Cardiac septum (tissue), 1 donor: ENCODE measurements at regions of chr9 and their contacts with region 1.

Region 1: DNA sequence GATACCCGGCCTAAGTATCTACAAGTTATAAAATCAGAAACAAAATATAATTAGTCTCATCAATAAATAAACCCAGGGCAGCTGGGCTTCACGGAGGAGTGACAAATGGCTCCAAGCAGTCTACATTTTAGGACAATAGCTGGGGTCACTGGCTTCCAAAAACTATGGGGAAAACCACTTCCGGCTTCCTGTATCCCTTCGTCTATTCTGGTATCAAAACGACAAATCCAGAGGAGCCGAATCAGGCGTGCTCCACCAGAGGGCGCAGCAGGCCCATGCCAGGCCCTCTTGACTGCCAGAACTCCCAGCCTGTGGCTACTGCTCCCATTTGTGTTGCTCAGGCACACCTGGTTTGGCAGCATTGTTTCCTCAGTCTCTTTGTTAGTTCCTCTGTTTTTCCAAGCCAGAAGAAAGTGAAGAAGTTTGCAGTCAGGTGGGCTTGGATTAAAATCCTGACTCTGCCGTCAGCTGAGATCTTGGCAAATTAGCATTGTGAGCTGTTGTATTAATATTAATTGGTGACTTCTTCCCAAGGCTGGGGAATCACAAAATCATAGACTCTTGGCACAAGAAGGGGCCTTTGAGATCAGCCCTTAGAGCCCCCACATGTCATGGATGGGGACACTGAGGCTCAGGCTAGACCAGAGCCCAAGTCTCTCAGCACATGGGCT is 11.6 kb upstream of the RAB14 start:
- DNase-seq: peak; percentile 90

Region 2: DNA sequence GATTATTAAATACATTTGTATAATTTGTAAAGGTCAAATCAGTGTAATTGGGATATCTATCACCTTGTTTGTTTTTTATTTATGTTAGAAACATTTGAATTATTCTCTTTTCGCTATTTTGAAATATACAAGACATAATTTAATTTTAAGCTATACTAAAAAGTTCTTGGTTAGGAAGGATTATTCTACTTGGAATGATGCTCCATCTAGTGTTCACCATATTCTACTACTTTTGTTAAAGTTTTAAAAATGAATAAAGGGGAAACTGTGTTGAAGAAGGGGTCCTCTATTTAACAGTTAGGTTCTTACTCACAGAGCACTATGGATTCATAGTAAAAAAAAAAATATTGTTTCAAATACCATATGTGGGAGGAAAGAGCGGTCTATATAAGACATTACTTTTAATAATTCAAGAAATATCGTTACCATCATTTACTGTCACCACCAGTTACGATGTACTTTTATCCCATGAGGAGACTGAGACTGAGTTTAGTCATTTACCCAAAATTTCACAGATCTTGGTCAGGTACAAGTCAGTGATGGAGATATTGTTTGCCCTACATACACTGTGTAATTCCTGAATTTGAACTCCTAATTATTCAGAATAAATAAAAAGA is 163.1 kb after region 1 on chr9:
- intact Hi-C with region 1: loop called (anchors 5 kb)
- DNase-seq: no peak

Region 3: DNA sequence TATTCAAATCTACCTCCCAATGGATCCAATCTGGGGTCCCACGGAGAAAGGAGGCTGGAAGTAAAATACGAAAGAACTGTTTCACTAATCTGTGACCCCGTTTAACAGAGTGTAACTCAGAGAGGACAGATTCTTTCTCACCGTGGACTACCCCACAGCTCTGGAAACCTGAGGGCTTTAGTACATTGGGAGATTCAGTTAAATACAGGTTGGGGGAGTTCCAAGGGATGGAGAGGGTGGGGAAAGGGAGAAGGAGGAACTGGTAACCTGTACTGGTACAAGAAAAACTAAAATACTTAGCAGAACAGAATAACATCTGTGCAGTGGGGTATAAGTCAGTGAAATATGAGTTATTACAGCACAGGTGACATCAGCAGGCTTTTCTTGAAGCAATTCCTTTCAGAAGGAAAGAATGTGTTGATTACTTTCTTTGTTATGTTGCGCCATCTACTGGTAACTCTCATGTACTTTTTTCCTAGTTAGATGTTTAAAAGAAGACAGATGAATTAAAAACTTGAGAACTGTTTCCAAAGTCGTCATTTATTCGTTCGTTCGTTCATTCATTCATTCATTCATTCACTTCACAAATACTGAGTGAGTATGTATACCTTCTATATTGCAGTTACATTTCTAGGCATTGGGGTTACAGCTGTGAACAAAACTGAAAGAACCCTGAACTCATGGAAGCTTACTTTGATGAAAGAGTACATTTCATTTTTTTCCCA is 186.8 kb after region 1 on chr9:
- intact Hi-C with region 1: loop called (anchors 2 kb)
- DNase-seq: no peak